ENCODE measurements at regions of chr20 and their contacts with region 1.

Region 1: GRCh38 chr20:290084-290831 is at the start of gene C20orf96:
- DNase-seq: peak; percentile 93
- ATAC-seq: peak; percentile 98
- H3K4me3 ChIP-seq: peak within 1 kb of the TSS; percentile 48 to 83 (median 69)
- H3K4me3 Mint-ChIP-seq: no peak within 1 kb of the TSS
- H3K27ac ChIP-seq: peak within 1 kb of the TSS in 1 of 2 donors; percentile 57
- H3K27ac Mint-ChIP-seq: no peak within 1 kb of the TSS
- H3K4me1 ChIP-seq: peaks cover 18 to 22% of the 10 kb centered on the region in 2 donors
- H3K4me1 Mint-ChIP-seq: peaks cover 6% of the 10 kb centered on the region
- H3K27me3 ChIP-seq: no peaks in the 10 kb centered on the region
- H3K27me3 Mint-ChIP-seq: no peaks in the 10 kb centered on the region
- CTCF ChIP-seq: peak; percentile 45
- total RNA-seq, gene C20orf96: 7.5 TPM in 2 replicates

Region 2: DNA sequence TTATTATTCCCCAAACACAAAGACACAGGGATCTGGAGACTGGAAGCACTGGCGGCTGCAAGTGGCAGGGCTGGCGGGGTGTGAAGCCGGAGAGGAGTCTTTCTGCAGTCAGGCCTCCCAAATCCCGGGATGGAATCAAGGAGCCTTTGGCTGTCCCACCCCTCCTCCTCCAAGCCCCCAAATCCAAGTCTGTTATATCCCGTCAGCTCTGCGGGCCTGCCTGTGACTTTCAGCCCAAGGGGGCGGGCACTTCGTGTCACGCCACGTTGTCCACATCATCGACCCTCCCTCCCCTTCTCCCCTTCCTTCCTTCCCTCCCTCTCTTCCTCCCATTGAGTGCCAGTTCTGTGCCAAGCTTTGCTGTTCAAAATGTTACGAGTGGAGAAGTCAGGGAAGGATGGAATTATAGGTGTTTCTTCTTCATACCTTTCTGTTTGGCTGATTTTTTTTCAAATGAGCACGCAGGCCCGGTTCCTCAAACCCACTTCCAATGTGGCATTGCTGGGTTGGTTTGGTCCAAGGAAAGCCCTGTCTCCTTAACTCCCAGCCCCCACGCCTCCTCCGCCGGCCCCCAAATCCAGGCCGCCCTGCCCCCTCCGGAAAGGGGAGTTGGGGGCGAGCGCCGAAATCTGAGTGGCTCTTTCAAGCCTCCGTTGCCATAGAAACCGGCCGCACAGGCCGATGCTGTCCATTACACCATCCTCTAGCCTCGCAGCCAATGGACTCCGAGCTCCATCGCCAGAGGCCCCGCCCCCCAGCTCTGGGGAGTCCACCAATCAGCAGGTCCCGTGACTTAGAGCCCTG is 19.8 kb after region 1 on chr20:
- CTCF ChIA-PET with region 1: no interaction called
- POLR2A ChIA-PET with region 1: interaction called, 6 read pairs
- intact Hi-C with region 1: loop called (anchors 1 kb)
- DNase-seq: peak; percentile 89
- ATAC-seq: peak; percentile 100
- H3K4me3 ChIP-seq: peak overlapping the region in 4 of 5 experiments; percentile 35 to 62 (median 44)
- H3K4me3 Mint-ChIP-seq: peak overlapping the region; percentile 92
- H3K27ac ChIP-seq: peak overlapping the region in 1 of 2 donors; percentile 14
- H3K27ac Mint-ChIP-seq: peak overlapping the region; percentile 89
- H3K4me1 ChIP-seq: peaks cover 10 to 13% of the 10 kb centered on the region in 2 donors
- H3K4me1 Mint-ChIP-seq: peaks cover 16% of the 10 kb centered on the region
- H3K27me3 ChIP-seq: no peaks in the 10 kb centered on the region
- H3K27me3 Mint-ChIP-seq: no peaks in the 10 kb centered on the region
- CTCF ChIP-seq: no peak

Region 3: GRCh38 chr20:347640-348484 is 57.6 kb after region 1 on chr20:
- CTCF ChIA-PET with region 1: interaction called, 3 read pairs
- POLR2A ChIA-PET with region 1: no interaction called
- intact Hi-C with region 1: loop called (anchors 1 kb)
- DNase-seq: peak; percentile 78
- ATAC-seq: peak; percentile 84
- H3K4me3 ChIP-seq: peak overlapping the region; percentile 27 to 92 (median 79)
- H3K4me3 Mint-ChIP-seq: peak overlapping the region; percentile 97
- H3K27ac ChIP-seq: peak overlapping the region; percentile 58 to 74
- H3K27ac Mint-ChIP-seq: peak overlapping the region; percentile 92
- H3K4me1 ChIP-seq: peaks cover 10 to 19% of the 10 kb centered on the region in 2 donors
- H3K4me1 Mint-ChIP-seq: peaks cover 13% of the 10 kb centered on the region
- H3K27me3 ChIP-seq: no peaks in the 10 kb centered on the region
- H3K27me3 Mint-ChIP-seq: no peaks in the 10 kb centered on the region
- CTCF ChIP-seq: no peak